ENCODE measurements at regions of chr11 and their contacts with region 1.

Region 1: DNA sequence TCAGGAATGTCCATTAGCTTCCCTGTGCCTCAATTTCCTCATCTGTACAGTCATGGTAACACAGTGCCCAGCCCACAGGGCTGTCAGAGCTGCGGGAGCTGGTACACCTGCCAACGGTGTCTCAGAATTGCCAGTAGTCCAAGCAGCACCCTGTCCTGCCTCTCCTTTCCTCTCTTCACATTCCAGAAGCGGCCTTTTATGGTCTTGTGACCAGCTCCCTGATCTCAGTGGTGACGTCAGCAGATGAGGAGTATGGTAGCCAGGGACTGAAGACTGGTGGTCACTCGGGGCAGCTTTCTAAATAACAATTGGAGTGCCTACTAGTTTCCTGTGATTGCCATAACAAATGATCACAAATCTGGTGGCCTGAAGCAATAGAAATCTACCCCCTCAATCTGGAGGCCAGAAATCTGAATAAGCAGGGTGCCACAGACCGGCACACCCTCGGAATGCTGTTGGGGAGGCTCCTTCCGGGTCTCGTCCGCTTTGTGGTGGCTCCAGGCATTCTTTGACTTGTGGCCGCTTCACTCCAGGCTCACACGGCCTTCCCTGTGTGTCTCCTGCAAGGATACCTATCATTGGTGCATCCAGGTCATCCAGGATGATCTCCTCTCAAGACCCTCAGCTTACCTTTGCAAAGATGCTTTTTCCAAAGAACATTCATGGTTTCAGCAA is 2.1 kb downstream of the FADD start:
- DNase-seq: peak; percentile 67
- H3K4me3 ChIP-seq: peak overlapping the region in 4 of 8 donors; percentile 87 to 99 (median 94)
- H3K27ac ChIP-seq: peak overlapping the region in 5 of 8 donors; percentile 97 to 99 (median 98)
- H3K4me1 ChIP-seq: peaks cover 20 to 70% (median 48%) of the 10 kb centered on the region in 6 donors
- H3K27me3 ChIP-seq: no peaks in the 10 kb centered on the region
- CTCF ChIP-seq: no peak
- POLR2A ChIP-seq: no peak

Region 2: GRCh38 chr11:70265341-70265740 is 60.2 kb after region 1 on chr11:
- intact Hi-C with region 1: loop called (anchors 5 kb)
- DNase-seq: no peak
- H3K4me3 ChIP-seq: no peak overlapping the region
- H3K27ac ChIP-seq: no peak overlapping the region
- H3K4me1 ChIP-seq: peaks cover 4 to 12% (median 8%) of the 10 kb centered on the region in 6 donors
- H3K27me3 ChIP-seq: peaks cover 0 to 55% (median 3%) of the 10 kb centered on the region in 7 donors
- CTCF ChIP-seq: no peak
- POLR2A ChIP-seq: no peak